Common myeloid progenitor, CD34-positive (primary cell): ENCODE measurements at regions of chr3 and their contacts with region 1.

Region 1: DNA sequence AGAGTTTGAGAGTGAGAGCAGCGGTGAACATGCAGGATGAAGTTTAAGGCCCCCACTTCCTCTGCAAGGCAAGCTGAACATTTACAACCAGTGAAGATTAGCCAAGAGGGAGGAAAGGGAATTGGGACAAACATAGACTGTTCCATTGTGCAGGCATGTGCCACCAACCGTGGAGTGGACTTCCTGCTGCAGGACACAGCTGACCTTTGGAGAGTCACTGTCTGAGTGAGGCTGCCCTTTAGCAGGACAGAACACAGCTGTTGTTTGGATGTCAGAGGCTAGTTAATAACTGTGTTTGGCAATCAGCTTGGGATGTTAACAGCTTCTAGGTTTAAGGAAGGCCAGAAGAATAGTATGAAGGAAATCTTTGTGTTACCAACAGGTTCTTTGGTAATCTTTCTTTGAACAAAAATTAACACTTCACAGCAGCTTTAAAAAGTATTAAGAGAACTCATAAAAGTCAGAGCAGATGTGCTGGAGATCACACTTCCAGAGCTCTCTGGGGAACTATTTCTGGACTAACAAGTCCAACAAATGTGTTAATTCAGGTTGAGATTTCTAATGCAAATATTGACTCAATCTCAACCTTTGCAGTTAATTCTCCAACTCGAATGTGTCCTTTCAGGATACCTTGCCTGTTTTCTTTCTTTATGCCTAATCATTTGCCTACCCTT is 31.4 kb downstream of the CTDSPL start:
- DNase-seq: no peak
- H3K4me3 ChIP-seq: peak overlapping the region in 2 of 7 experiments; percentile 20 to 42
- H3K27ac ChIP-seq: peak overlapping the region; percentile 48 to 55
- H3K4me1 ChIP-seq: peaks cover 33 to 77% (median 50%) of the 10 kb centered on the region in 4 experiments
- H3K27me3 ChIP-seq: no peaks in the 10 kb centered on the region

Region 2: DNA sequence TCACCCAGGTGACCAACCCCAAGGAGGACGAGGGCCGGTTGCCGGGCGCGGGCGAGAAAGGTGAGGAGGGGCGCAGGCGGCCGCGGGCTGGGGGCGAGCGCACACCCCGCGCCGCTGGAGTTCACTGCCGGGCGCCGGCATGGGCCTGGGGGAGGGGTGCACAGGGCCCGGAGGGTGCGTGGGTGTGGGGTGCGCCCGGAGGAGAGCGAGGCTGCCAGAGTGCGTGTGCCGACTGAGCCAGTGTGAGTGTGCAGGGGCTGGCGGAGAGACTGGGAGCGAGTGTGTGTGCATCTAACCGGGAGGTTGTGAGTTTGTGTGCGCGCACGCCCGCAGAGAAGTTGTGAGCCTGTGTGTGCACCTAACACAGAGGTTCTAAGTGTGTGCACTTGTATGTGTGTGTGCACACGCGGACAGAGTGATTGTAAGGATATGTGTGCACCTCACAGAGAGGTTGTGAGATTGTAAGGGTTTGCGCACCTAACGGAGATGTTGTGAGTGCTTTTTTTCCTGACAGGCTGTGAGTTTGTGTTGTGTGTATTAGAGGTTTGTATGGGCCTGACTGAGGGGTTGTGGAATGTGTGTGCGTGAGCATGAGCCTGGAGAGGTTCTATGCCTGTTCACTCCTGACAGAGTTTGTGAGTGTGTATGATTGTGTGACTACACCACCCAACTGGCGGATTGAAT is 30.7 kb before region 1 on chr3:
- CTCF ChIA-PET with region 1: interaction called, 12 read pairs
- POLR2A ChIA-PET with region 1: no interaction called
- DNase-seq: peak; percentile 25 to 75 (median 57)
- H3K4me3 ChIP-seq: peak overlapping the region; percentile 60 to 92 (median 77)
- H3K27ac ChIP-seq: no peak overlapping the region
- H3K4me1 ChIP-seq: peaks cover 0 to 43% (median 34%) of the 10 kb centered on the region in 4 experiments
- H3K27me3 ChIP-seq: no peaks in the 10 kb centered on the region

Region 3: GRCh38 chr3:37907906-37908305 is 14.8 kb after region 1 on chr3:
- CTCF ChIA-PET with region 1: interaction called, 51 read pairs
- POLR2A ChIA-PET with region 1: interaction called, 5 read pairs
- DNase-seq: peak in 2 of 3 donors; percentile 54 to 55
- H3K4me3 ChIP-seq: peak overlapping the region in 3 of 7 experiments; percentile 20 to 46 (median 40)
- H3K27ac ChIP-seq: peak overlapping the region in 1 of 2 experiments; percentile 39
- H3K4me1 ChIP-seq: peaks cover 19 to 95% (median 70%) of the 10 kb centered on the region in 4 experiments
- H3K27me3 ChIP-seq: no peaks in the 10 kb centered on the region

Region 4: DNA sequence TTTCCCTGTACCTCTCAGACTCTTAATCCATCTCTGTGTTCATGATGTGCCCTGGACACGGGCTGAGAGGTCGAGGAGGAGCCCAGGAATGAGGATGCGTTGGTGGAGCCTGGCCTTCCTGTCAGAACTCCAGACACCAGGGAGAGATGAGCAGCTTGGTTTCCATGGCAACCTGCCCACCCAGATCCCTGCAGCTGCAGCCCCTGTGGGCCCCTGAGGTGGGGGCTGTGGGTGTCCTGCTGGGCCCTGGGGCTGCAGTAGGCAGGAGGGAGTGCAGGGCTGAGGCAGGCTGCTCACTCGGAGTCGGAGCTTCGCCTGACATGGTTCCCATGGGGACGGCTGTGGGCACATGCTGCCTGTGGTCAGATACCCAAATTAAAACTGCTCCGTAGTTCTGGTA is 930.7 kb after region 1 on chr3:
- CTCF ChIA-PET with region 1: no interaction called
- POLR2A ChIA-PET with region 1: no interaction called
- DNase-seq: no peak
- H3K4me3 ChIP-seq: no peak overlapping the region
- H3K27ac ChIP-seq: no peak overlapping the region
- H3K4me1 ChIP-seq: peaks cover 0 to 8% (median 4%) of the 10 kb centered on the region in 4 experiments
- H3K27me3 ChIP-seq: no peaks in the 10 kb centered on the region